Right cardiac atrium (tissue), 5 donors: ENCODE measurements at regions of chr10 and their contacts with region 1.

Region 1: GRCh38 chr10:122112625-122113160 is 123.7 kb downstream of the TACC2 start:
- DNase-seq: peak; percentile 91 to 95 (median 94)
- ATAC-seq: peak; percentile 94 to 95
- H3K4me3 ChIP-seq: peak overlapping the region; percentile 60
- H3K27ac ChIP-seq: peak overlapping the region; percentile 95
- H3K4me1 ChIP-seq: peaks cover 11% of the 10 kb centered on the region
- H3K27me3 ChIP-seq: no peaks in the 10 kb centered on the region

Region 2: DNA sequence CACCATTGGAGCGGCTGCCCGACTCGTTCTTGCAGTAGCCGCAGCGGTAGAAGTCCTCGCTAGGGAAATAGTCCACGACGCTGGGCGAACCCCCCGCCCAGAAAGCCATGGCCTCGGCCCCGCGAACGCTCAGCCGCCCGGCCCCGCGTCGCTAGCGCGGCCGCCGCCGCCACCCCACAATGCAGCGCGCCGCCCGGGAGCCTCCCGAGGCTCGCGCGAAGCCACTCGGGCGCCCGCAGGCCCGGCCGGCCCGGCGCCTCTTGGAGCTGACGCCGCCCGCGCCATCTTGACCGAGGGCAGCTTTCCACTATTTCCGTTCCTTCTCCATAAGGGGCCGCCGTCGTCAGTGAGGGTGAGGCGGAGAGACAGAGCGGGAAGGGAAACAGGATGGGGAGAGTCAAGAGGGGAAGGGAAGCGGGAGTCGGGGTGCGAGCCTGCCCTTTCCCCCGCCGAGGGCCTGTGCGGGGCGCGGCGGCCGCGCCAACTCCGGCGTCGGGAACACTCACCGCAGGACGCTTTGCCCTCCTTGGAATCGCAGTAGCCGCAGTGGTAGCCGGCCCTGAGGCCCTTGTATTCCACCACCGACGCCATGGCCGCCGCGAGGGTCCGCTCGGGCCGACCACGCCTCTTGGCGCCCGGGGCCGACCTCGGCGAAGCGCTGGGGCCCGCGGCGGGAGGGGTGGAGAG is 184.7 kb before region 1 on chr10 and contains the start of gene ATE1:
- intact Hi-C with region 1: loop called in 1 of 4 experiments (anchors 10 kb)
- DNase-seq: peak; percentile 92 to 97 (median 96)
- ATAC-seq: peak; percentile 98
- H3K4me3 ChIP-seq: peak within 1 kb of the TSS; percentile 95
- H3K27ac ChIP-seq: peak within 1 kb of the TSS; percentile 100
- H3K4me1 ChIP-seq: no peaks in the 10 kb centered on the region
- H3K27me3 ChIP-seq: no peaks in the 10 kb centered on the region
- total RNA-seq, gene ATE1: 47.7 to 55.8 (median 48.7) TPM

Region 3: GRCh38 chr10:122051251-122051996 is 61.3 kb before region 1 on chr10:
- intact Hi-C with region 1: loop called in 3 of 4 experiments (anchors 5 to 10 kb)
- DNase-seq: peak in 2 of 3 donors; percentile 44 to 76
- ATAC-seq: peak; percentile 22 to 34
- H3K4me3 ChIP-seq: no peak overlapping the region
- H3K27ac ChIP-seq: peak overlapping the region; percentile 3
- H3K4me1 ChIP-seq: peaks cover 5% of the 10 kb centered on the region
- H3K27me3 ChIP-seq: no peaks in the 10 kb centered on the region

Region 4: GRCh38 chr10:122142641-122143237 is 30.0 kb after region 1 on chr10:
- intact Hi-C with region 1: no loop called
- DNase-seq: peak in 2 of 3 donors; percentile 76 to 82
- ATAC-seq: no peak
- H3K4me3 ChIP-seq: no peak overlapping the region
- H3K27ac ChIP-seq: peak overlapping the region; percentile 85
- H3K4me1 ChIP-seq: peaks cover 30% of the 10 kb centered on the region
- H3K27me3 ChIP-seq: no peaks in the 10 kb centered on the region